ENCODE measurements at regions of chr4 and their contacts with region 1.

Region 1: GRCh38 chr4:140523857-140524742 is at the start of gene ELMOD2:
- DNase-seq: peak; percentile 95
- H3K4me3 Mint-ChIP-seq: peak within 1 kb of the TSS; percentile 81
- H3K27ac Mint-ChIP-seq: no peak within 1 kb of the TSS
- H3K4me1 Mint-ChIP-seq: peaks cover 7% of the 10 kb centered on the region
- H3K27me3 Mint-ChIP-seq: no peaks in the 10 kb centered on the region
- CTCF ChIP-seq: peak; percentile 76
- total RNA-seq, gene ELMOD2: 19.6 and 22.5 TPM in 2 replicates

Region 2: DNA sequence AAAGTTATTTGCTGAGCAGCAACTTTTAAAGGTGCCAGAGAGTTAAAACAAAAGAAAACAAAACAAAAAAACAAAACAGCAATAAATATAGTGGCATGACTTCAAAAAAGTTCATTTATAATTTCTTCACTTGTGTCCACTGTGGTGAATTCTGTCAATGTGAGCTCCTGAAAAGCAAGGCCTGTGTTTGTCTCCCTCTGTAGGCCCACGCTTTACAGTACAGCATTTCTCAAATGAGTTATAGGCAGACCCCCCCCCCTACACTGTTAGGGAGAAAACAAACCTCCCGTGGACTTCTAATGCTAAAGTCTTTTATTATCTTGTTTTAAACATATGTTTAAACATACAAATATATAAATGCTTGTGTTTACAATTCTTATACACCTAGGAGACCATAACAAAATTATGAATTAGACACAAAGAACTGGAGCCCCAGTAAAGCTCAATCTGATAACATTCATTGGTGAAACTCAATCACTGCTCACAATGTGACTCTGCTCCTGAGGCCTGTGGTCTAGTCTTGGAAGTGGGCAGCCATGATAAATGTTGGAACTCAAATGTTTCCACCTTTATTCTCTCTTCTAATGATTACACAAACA is 197.6 kb before region 1 on chr4:
- CTCF ChIA-PET with region 1: no interaction called
- intact Hi-C with region 1: no loop called
- DNase-seq: peak; percentile 14
- H3K4me3 Mint-ChIP-seq: no peak overlapping the region
- H3K27ac Mint-ChIP-seq: no peak overlapping the region
- H3K4me1 Mint-ChIP-seq: peaks cover 5% of the 10 kb centered on the region
- H3K27me3 Mint-ChIP-seq: no peaks in the 10 kb centered on the region
- CTCF ChIP-seq: peak; percentile 32

Region 3: GRCh38 chr4:140439644-140440142 is 84.4 kb before region 1 on chr4:
- CTCF ChIA-PET with region 1: no interaction called
- intact Hi-C with region 1: loop called (anchors 10 kb)
- DNase-seq: no peak
- H3K4me3 Mint-ChIP-seq: no peak overlapping the region
- H3K27ac Mint-ChIP-seq: no peak overlapping the region
- H3K4me1 Mint-ChIP-seq: no peaks in the 10 kb centered on the region
- H3K27me3 Mint-ChIP-seq: no peaks in the 10 kb centered on the region
- CTCF ChIP-seq: no peak

Region 4: GRCh38 chr4:140686796-140687195 is 162.7 kb after region 1 on chr4:
- CTCF ChIA-PET with region 1: no interaction called
- intact Hi-C with region 1: no loop called
- DNase-seq: no peak
- H3K4me3 Mint-ChIP-seq: no peak overlapping the region
- H3K27ac Mint-ChIP-seq: no peak overlapping the region
- H3K4me1 Mint-ChIP-seq: no peaks in the 10 kb centered on the region
- H3K27me3 Mint-ChIP-seq: peaks cover 13% of the 10 kb centered on the region
- CTCF ChIP-seq: no peak

Measured in Calu3 (cell line).